Panc1 (cell line): ENCODE measurements at regions of chr13 and their contacts with region 1.

Region 1: GRCh38 chr13:102055090-102055779 is 346.6 kb downstream of the FGF14 start:
- DNase-seq: no peak
- ATAC-seq: no peak
- H3K4me3 ChIP-seq: no peak overlapping the region
- H3K27ac ChIP-seq: no peak overlapping the region
- H3K4me1 ChIP-seq: no peaks in the 10 kb centered on the region
- H3K27me3 ChIP-seq: no peaks in the 10 kb centered on the region
- CTCF ChIP-seq: no peak

Region 2: GRCh38 chr13:101955764-101956163 is 99.5 kb before region 1 on chr13:
- CTCF ChIA-PET with region 1: no interaction called
- POLR2A ChIA-PET with region 1: no interaction called
- in situ Hi-C with region 1: no loop called
- intact Hi-C with region 1: loop called (anchors 5 kb)
- DNase-seq: no peak
- ATAC-seq: no peak
- H3K4me3 ChIP-seq: no peak overlapping the region
- H3K27ac ChIP-seq: no peak overlapping the region
- H3K4me1 ChIP-seq: no peaks in the 10 kb centered on the region
- H3K27me3 ChIP-seq: no peaks in the 10 kb centered on the region
- CTCF ChIP-seq: no peak

Region 3: DNA sequence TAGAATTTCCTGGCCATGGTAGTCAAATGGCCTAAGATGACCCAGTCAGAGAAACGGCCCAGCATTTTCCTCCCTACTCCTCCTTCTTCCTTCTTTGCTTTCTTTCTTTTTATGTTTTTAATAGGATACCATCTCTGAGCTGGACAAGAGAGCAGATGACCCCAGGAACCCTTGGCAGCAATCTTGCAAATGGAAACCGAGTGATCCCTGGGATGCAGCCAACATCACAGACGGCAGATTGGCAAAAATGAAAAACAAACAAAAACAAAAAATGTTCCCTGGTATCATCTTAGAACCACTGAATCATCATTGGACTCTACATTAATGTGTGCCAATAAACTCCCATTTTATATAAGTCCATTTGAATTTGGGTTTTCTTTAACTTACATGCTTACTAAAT is 77.8 kb before region 1 on chr13:
- CTCF ChIA-PET with region 1: no interaction called
- POLR2A ChIA-PET with region 1: no interaction called
- in situ Hi-C with region 1: no loop called
- intact Hi-C with region 1: no loop called
- DNase-seq: no peak
- ATAC-seq: no peak
- H3K4me3 ChIP-seq: no peak overlapping the region
- H3K27ac ChIP-seq: no peak overlapping the region
- H3K4me1 ChIP-seq: no peaks in the 10 kb centered on the region
- H3K27me3 ChIP-seq: no peaks in the 10 kb centered on the region; the same call in 1 of the 2 replicates
- CTCF ChIP-seq: no peak